A549 (cell line): ENCODE measurements at regions of chr2 and their contacts with region 1.

Region 1: GRCh38 chr2:119137502-119137901 is 21.0 kb downstream of the C1QL2 start:
- DNase-seq: no peak
- ATAC-seq: no peak; a peak in 1 of 6 replicates
- H3K4me3 ChIP-seq: no peak overlapping the region
- H3K27ac ChIP-seq: no peak overlapping the region
- H3K4me1 ChIP-seq: no peaks in the 10 kb centered on the region; the same call in 2 of the 3 replicates
- CTCF ChIP-seq: no peak
- EP300 ChIP-seq: no peak
- POLR2A ChIP-seq: no peak
- RAD21 ChIP-seq: no peak

Region 2: GRCh38 chr2:119049968-119050704 is 87.4 kb before region 1 on chr2:
- CTCF ChIA-PET with region 1: no interaction called
- POLR2A ChIA-PET with region 1: no interaction called
- DNase-seq: no peak
- ATAC-seq: no peak
- H3K4me3 ChIP-seq: no peak overlapping the region
- H3K27ac ChIP-seq: no peak overlapping the region
- H3K4me1 ChIP-seq: no peaks in the 10 kb centered on the region
- CTCF ChIP-seq: no peak; the same call in 2 of the 3 replicates
- EP300 ChIP-seq: no peak
- POLR2A ChIP-seq: no peak
- RAD21 ChIP-seq: no peak

Region 3: DNA sequence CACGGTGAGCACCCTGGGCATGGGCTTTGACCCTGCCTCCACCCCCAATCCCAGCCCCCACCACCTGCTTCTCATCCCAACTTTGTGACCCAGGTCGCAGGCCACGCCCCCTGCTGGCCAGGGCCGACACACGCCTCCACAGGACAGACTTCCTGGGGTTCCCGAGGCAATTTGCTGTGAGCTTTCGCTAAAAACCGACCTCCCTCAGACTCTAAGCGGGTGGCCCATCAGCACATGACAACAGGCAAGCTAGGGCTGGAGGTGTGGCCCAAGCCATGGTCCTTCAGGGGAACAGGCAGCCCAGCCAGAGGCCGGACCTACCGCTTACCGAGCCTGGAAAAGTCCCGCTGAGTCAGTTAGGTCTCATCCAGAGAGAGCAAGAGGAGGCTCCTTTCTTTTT is 10.9 kb before region 1 on chr2:
- CTCF ChIA-PET with region 1: interaction called, 21 read pairs
- POLR2A ChIA-PET with region 1: no interaction called
- DNase-seq: peak; percentile 34 to 50
- ATAC-seq: peak; percentile 51 to 83; a peak in 4 of 6 replicates
- H3K4me3 ChIP-seq: no peak overlapping the region
- H3K27ac ChIP-seq: no peak overlapping the region
- H3K4me1 ChIP-seq: no peaks in the 10 kb centered on the region
- CTCF ChIP-seq: peak; percentile 42
- EP300 ChIP-seq: no peak
- POLR2A ChIP-seq: no peak
- RAD21 ChIP-seq: peak in 1 of 2 experiments; percentile 21; a peak in 1 of 5 replicates